ENCODE measurements at regions of chr15 and their contacts with region 1.

Region 1: GRCh38 chr15:45205192-45205591 is 17.4 kb upstream of the SHF start:
- DNase-seq: peak; percentile 69
- ATAC-seq: peak; percentile 39
- H3K4me3 ChIP-seq: no peak overlapping the region
- H3K27ac ChIP-seq: no peak overlapping the region
- H3K4me1 ChIP-seq: peaks cover 6% of the 10 kb centered on the region
- H3K27me3 ChIP-seq: no peaks in the 10 kb centered on the region
- CTCF ChIP-seq: peak; percentile 97

Region 2: GRCh38 chr15:45263003-45263402 is 57.8 kb after region 1 on chr15:
- CTCF ChIA-PET with region 1: no interaction called
- POLR2A ChIA-PET with region 1: no interaction called
- in situ Hi-C with region 1: no loop called
- intact Hi-C with region 1: loop called (anchors 5 kb)
- DNase-seq: no peak
- ATAC-seq: no peak
- H3K4me3 ChIP-seq: no peak overlapping the region
- H3K27ac ChIP-seq: no peak overlapping the region
- H3K4me1 ChIP-seq: no peaks in the 10 kb centered on the region
- H3K27me3 ChIP-seq: no peaks in the 10 kb centered on the region
- CTCF ChIP-seq: no peak

Region 3: DNA sequence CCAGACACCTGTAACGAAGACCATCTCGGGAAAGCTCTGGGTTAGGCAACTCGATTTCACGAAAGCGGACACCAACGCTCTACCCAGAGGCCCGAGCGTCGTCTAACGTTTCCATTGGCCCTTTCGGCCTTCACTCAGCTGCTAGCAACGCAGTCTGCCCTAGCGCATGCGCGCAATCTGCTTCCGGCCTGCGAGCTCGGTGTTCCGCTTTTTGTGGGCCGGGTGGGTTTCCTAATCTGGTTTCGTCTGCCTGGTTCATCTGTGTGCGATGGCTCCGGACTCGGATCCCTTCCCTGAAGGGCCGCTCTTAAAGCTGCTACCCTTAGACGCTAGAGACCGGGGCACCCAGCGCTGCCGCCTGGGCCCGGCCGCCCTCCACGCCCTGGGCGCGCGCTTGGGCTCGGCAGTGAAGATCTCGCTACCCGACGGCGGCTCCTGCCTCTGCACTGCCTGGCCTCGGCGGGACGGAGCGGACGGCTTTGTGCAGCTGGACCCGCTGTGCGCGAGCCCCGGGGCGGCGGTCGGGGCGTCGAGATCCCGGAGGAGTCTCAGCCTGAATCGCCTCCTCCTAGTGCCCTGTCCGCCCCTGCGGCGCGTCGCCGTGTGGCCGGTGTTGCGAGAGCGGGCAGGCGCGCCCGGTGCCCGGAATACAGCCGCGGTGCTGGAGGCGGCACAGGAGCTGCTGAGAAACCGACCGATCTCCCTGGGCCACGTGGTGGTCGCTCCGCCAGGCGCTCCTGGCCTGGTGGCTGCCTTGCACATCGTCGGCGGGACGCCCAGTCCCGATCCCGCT is 197.2 kb after region 1 on chr15:
- CTCF ChIA-PET with region 1: interaction called, 10 read pairs
- POLR2A ChIA-PET with region 1: no interaction called
- in situ Hi-C with region 1: no loop called
- intact Hi-C with region 1: loop called (anchors 5 kb)
- DNase-seq: peak; percentile 97
- ATAC-seq: peak; percentile 96
- H3K4me3 ChIP-seq: peak overlapping the region; percentile 86 to 98
- H3K27ac ChIP-seq: peak overlapping the region; percentile 100
- H3K4me1 ChIP-seq: peaks cover 15% of the 10 kb centered on the region
- H3K27me3 ChIP-seq: no peaks in the 10 kb centered on the region
- CTCF ChIP-seq: no peak

Region 4: DNA sequence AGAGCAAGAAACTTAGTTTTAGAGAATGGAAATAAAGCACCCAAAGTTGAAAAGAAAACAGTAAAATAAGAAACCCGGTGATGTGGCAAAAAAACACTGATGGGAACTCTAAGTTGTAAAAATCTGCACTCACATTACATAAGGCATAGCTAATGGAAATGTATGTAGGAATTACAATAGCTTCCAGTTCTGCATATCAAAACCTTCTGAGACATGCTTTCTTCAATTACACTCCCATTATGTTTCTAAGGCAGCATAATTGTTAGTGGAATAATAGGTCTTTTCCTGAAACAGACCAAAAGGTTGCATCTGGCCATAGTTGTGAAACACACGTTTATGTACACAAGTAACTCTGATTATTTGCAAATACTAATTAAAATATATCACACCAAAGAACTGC is 275.9 kb after region 1 on chr15:
- CTCF ChIA-PET with region 1: no interaction called
- POLR2A ChIA-PET with region 1: interaction called, 14 read pairs
- in situ Hi-C with region 1: no loop called
- intact Hi-C with region 1: no loop called
- DNase-seq: no peak
- ATAC-seq: no peak
- H3K4me3 ChIP-seq: no peak overlapping the region
- H3K27ac ChIP-seq: no peak overlapping the region
- H3K4me1 ChIP-seq: no peaks in the 10 kb centered on the region
- H3K27me3 ChIP-seq: no peaks in the 10 kb centered on the region
- CTCF ChIP-seq: no peak

Measured in Panc1 (cell line).